ENCODE measurements at regions of chr21 and their contacts with region 1.

Region 1: GRCh38 chr21:41663801-41664788 is 102.8 kb downstream of the RIPK4 start:
- DNase-seq: no peak
- H3K4me3 ChIP-seq: no peak overlapping the region
- H3K27ac ChIP-seq: peak overlapping the region; percentile 37 to 50
- H3K4me1 ChIP-seq: peaks cover 4 to 18% of the 10 kb centered on the region in 2 donors
- H3K27me3 ChIP-seq: no peaks in the 10 kb centered on the region
- CTCF ChIP-seq: no peak

Region 2: DNA sequence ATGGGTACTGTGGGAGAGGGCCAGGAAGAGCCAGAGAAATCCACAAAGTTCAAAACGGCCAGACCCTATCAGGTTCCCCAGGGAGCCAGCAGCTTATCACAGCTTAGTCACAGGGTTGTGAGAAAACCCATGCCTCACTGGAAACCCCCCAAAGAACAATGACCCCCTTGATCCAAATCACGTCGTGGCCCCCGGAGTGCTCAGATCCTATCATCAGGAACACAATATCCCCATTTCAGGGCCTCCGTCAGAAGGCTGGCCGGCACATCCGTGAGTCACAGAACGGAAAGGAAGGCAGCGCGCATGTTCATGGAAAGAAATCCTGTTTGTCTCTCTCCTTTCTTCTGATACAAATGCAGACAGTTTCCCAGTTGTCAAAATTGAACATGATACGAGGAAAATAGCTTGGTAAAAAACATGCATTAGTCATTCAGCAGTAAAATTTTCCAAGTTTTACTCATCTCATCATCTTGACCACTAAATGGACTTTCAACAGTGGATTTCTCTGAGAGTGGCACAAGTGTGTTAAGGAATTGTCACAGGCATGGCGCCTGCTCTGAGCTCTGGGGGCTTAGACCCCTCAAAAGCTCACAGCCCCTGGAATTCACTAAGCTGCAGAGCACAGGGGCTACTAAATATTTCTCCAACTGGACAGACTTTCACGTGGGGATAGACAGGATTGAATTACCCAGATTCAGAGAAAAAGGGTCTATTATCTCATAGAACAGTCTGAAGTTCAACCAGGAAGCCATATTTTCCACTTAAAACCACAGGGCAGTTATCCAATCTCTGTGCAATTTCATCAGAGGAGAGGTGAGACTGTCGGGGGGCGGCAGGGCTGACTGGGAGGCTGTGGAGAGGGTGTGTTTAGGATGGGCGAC is 22.0 kb before region 1 on chr21:
- intact Hi-C with region 1: loop called (anchors 2 kb)
- DNase-seq: peak; percentile 47 to 92
- H3K4me3 ChIP-seq: no peak overlapping the region
- H3K27ac ChIP-seq: peak overlapping the region; percentile 90 to 91
- H3K4me1 ChIP-seq: peaks cover 5 to 19% of the 10 kb centered on the region in 2 donors
- H3K27me3 ChIP-seq: no peaks in the 10 kb centered on the region
- CTCF ChIP-seq: no peak

Region 3: GRCh38 chr21:41726945-41727783 is 63.1 kb after region 1 on chr21:
- intact Hi-C with region 1: loop called (anchors 5 kb)
- DNase-seq: peak; percentile 62 to 93
- H3K4me3 ChIP-seq: no peak overlapping the region
- H3K27ac ChIP-seq: peak overlapping the region; percentile 83 to 91
- H3K4me1 ChIP-seq: peaks cover 9 to 17% of the 10 kb centered on the region in 2 donors
- H3K27me3 ChIP-seq: no peaks in the 10 kb centered on the region
- CTCF ChIP-seq: no peak

Region 4: DNA sequence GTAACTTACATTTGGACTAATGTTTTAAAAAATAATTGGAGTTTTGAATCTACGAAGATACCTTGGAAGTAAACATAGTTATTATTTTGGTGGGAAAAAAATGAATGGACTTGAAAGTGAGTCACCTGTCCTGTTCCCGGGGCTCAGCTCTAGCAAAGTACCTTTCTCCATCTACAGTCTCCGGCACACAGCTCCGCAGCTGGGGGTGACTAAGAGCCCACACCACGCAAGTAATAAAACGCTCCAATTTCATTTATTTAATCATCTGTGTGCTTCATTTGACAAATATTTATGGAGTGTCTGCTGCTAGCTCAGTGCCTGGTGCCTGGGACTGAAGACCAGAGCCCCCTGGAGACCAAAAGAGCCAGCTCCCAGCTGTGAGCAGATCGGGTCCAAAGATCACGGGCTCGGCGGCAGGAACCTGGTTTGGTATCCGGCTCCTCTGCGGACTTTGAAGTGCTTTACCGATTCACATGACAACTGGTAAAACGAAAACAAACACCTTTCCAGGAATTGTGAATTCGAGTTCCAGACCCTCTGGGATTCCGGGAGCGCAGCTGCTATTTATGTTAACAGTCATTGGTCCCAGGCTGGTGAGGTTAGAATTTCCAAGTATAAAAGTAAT is 104.5 kb after region 1 on chr21:
- intact Hi-C with region 1: loop called (anchors 2 kb)
- DNase-seq: peak in 1 of 2 donors; percentile 74
- H3K4me3 ChIP-seq: peak overlapping the region; percentile 58 to 60
- H3K27ac ChIP-seq: peak overlapping the region; percentile 74 to 83
- H3K4me1 ChIP-seq: peaks cover 0 to 11% of the 10 kb centered on the region in 2 donors
- H3K27me3 ChIP-seq: no peaks in the 10 kb centered on the region
- CTCF ChIP-seq: peak in 2 of 3 experiments; percentile 15 to 28